ENCODE measurements at regions of chr12 and their contacts with region 1.

Region 1: GRCh38 chr12:101773650-101774162 is 34.4 kb upstream of the SYCP3 start:
- H3K4me3 ChIP-seq: no peak overlapping the region
- H3K27ac ChIP-seq: no peak overlapping the region
- H3K4me1 ChIP-seq: no peaks in the 10 kb centered on the region
- CTCF ChIP-seq: peak; percentile 69

Region 2: GRCh38 chr12:101697197-101697929 is 76.3 kb before region 1 on chr12 and contains the start of gene CHPT1:
- CTCF ChIA-PET with region 1: no interaction called
- POLR2A ChIA-PET with region 1: no interaction called
- H3K4me3 ChIP-seq: peak within 1 kb of the TSS; percentile 69
- H3K27ac ChIP-seq: peak within 1 kb of the TSS; percentile 90
- H3K4me1 ChIP-seq: peaks cover 8% of the 10 kb centered on the region
- CTCF ChIP-seq: no peak

Region 3: DNA sequence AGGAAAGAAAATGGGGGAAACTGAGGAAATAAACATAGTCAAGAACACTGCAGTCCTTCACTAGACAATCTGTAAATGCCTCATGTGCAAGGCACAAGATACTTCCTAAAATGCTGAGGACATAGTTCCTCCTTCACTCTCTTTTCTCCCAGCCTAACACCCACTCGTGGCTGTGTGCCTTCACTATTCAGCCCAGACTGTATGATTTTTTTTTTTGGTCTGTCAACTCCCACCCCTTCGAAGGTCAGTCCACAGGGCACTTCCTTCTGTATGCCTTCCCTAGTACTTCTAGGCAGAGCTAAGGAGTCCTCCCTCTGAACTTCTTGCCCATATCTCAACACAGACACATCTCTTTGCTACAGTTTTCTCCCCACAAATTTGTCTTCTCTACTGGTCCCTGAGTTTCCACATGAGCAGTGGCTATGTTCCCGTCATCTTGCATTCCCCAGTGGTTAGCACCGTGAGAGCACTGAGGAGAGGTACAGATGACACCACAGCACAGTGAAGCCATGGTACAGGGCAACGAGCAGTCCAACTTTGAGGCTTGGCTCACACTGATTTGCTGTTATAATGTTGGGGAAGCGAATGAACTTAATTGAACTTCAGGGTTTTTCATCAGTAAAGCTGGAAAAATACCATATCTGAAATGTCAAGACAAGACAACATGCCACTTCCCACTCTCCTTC is 10.3 kb before region 1 on chr12:
- CTCF ChIA-PET with region 1: interaction called, 12 read pairs
- POLR2A ChIA-PET with region 1: no interaction called
- H3K4me3 ChIP-seq: no peak overlapping the region
- H3K27ac ChIP-seq: no peak overlapping the region
- H3K4me1 ChIP-seq: no peaks in the 10 kb centered on the region
- CTCF ChIP-seq: no peak

Region 4: DNA sequence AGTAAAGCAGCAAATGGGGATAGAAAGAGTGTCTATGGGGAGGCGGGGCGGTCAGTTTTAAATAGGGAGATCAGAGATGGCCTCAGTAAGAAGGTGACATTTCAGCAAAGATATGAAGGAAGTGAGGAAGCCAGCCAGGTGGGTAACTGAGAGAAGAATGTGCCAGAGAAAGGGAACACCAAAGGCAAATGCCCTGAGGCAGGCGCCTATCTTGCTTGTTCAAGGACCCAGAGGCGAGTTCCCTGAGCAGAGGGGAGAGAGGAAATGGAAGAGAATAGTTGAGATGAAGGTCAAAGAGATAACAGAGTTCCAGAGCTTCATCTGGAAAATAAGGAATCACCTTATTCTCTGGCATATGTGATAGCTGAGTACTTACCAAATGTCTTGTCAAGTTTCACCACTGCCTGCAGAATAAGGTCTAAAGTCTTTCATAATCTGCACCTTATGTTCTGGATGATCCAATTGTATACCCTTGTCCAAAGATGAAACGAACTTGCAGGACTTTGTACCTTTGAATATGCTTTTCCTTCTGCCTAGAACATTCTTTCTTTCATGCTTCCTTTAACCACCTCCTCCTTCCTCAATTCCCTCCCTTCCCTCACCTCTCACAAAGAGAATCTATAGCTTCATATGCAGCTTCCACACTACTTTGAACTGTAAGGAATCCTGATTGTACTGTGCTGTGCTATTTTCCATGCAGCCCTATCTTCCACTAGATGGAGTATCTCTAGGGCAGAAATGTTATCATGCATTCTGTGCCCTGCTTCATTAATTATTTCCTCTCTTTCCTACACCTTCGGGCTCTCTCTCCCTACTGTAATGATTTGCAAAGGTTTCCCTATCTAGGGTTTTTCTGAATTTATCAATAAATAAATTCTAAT is 18.6 kb after region 1 on chr12:
- CTCF ChIA-PET with region 1: interaction called, 19 read pairs
- POLR2A ChIA-PET with region 1: no interaction called
- H3K4me3 ChIP-seq: no peak overlapping the region
- H3K27ac ChIP-seq: no peak overlapping the region
- H3K4me1 ChIP-seq: no peaks in the 10 kb centered on the region
- CTCF ChIP-seq: peak; percentile 33; the same call in 1 of the 2 replicates

Region 5: DNA sequence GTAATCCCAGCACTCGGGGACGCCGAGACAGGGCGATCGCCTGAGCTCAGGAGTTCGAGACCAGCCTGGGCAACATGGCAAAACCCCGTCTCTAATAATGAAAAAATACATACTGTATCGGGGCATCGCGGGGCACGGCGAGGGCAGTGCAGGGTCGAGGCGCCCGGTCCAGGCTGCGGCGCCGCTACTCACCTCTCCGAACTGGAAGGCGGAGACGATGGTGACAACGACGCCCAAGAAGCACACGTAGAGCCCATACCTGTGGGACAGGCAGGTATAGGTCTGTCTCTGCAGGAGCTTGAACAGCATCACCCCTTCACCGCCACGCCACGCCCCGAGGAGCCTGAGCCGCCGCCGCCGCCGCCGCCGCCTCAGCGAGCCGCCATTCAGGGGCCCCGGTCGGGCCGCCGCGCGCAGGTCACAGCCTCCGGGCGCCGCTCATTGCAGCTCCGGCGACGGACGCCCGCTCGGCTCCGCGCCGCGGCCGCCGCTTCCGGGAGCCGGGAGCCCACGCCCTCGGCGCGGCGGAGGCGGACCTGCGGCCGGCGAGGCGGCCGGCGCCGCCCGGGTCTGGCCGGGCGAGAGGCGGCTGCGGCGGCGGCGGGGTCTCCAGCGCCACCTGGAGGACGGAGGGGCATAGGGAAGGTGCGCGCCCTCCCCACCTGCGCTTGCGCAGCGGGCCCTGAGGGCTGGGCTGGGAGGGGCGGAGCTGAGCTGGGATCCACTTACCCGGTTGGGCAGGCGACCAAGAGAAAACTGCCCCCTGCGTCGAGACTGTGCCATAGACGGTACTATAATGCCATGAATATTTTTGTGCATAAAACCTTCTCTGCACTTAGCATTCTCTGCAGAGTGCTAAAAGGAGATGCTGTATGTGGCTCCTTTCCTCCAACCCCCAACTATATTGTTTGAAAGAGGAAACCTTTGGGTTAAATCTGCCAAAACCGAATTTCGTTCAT is 56.9 kb after region 1 on chr12 and contains the start of gene GNPTAB:
- CTCF ChIA-PET with region 1: interaction called, 44 read pairs
- POLR2A ChIA-PET with region 1: no interaction called
- H3K4me3 ChIP-seq: peak within 1 kb of the TSS; percentile 87
- H3K27ac ChIP-seq: peak within 1 kb of the TSS; percentile 86
- H3K4me1 ChIP-seq: no peaks in the 10 kb centered on the region
- CTCF ChIP-seq: peak; percentile 93

Region 6: DNA sequence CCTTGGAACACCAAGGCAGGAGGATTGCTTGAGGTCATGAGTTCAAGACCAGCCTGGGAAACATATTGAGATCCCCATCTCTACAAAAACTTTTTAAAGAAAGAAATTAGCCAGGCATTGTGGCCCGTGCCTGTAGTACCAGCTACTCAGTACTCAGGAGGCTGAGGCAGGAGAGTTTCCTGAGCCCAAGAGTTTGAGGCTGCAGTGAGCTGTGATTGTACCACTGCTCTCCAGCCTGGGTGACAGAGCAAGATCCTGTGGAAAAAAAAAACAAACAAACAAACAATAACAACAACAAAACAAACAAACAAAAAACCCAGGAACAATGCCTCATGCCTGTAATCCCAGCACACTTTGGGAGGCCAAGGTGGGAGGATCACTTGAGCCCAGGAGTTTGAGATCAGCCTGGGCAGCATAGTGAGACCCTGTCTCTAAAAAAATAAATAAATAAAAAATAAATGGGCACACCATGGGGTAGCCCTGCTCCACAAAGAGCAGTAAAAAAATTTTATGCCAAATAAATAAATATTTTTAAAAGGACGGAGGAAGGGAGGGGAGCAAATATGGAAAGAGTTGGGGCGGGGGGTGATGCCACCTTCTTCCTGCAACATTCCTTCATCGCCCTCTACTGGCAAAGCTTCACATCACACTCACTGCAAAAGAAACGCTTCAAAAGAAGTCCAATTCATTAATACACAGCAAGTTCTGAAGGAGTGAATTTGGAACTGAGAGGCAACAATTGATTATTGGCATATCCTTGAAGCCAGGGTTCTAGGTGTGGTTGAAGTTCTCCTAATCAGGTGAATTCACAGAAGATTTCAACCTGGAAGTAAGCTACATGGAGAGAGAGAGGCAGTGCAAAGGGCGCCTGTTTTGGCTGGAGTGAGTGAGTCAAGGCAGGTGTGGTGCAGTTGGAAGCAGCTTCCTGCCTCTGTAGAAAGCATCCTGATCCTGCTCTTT is 65.9 kb after region 1 on chr12:
- CTCF ChIA-PET with region 1: interaction called, 50 read pairs
- POLR2A ChIA-PET with region 1: no interaction called
- H3K4me3 ChIP-seq: no peak overlapping the region
- H3K27ac ChIP-seq: no peak overlapping the region
- H3K4me1 ChIP-seq: no peaks in the 10 kb centered on the region
- CTCF ChIP-seq: 0 out of 2 replicates have a peak, but pooled peaks have one; percentile 54

Measured in HEK293 (cell line).